ENCODE measurements at regions of chr22 and their contacts with region 1.

Region 1: DNA sequence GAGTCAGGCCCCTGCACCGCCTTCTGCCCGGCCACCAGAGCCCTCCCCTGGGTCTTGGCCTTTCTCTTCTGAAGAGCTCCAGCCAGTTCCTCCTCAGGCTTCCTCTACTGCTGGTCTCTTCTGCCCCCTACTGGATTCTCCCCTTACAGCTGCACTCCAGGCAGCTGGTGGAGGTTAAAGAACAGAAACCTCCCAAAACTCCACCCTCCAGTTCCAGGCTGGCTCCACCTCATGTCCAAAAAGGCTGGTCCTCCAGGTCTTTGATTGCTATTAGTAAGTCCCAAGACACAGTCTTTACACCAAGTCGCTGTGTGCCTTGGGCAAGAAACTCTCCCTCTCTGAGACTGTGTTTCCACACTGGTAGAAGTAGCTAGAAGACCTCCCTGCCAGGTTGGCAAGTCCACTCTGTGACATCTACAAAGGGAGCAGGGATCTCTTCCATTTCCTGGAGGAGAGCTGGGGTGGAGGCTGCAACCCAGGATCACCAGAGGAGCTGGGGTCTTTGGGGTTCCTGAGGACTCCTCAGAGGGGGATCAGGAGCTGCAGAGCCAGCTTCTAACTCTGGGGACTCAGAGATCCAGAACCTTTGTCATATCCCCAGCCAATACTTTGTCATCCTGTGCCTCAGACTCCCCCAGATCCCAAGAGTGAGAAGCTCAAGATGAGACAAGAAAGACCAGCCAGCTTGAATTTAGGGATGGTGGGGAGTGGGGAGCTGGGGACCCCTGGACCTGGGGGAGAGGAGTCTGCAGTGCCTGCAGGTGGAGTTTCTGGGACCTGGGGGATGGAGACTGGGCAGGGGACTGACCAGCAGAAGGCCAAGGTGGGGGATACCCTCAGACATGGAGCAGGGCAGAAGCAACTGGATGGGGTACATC is 3.4 kb upstream of the IGLL5 start:
- DNase-seq: peak in 6 of 10 donors; percentile 19 to 56 (median 46)
- H3K4me3 ChIP-seq: no peak overlapping the region
- H3K27ac ChIP-seq: no peak overlapping the region
- H3K27me3 ChIP-seq: peaks cover 0 to 16% (median 0%) of the 10 kb centered on the region in 45 donors
- CTCF ChIP-seq: peak in 55 of 56 donors; percentile 40 to 80 (median 66)

Region 2: DNA sequence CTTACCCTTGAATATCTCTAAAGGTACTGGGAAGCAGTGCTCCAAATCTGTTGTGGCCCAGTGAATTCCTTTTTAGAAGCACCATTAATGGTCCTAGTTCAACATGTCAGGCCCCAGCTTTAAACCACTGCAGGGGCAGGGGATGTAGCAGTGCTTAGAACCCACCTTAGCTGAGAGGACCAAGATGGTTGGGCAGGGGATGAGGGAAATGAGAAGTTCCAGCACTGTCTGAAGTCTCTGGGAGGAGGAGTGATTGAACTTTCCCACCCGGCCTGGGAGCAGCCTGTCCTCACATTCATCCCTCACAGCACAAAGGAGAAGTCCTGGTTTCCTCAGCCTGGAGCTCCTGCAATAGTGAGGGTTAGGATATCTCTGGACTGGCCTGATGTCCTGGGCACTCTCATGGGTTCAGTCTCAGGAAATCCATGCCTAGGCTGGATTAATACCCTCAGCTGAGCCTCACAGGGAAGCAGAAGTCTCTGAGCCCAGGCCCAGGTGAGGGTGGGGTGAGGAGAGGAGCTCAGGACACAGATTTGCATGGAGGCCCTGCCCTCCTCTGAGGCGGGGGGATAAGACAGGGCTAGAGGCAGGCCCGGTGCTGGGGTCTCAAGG is 296.6 kb before region 1 on chr22:
- intact Hi-C with region 1: loop called in 1 of 2 experiments (anchors 10 kb)
- DNase-seq: no peak
- H3K4me3 ChIP-seq: no peak overlapping the region
- H3K27ac ChIP-seq: no peak overlapping the region
- H3K27me3 ChIP-seq: peaks cover 0 to 22% (median 0%) of the 10 kb centered on the region in 45 donors
- CTCF ChIP-seq: no peak

Region 3: DNA sequence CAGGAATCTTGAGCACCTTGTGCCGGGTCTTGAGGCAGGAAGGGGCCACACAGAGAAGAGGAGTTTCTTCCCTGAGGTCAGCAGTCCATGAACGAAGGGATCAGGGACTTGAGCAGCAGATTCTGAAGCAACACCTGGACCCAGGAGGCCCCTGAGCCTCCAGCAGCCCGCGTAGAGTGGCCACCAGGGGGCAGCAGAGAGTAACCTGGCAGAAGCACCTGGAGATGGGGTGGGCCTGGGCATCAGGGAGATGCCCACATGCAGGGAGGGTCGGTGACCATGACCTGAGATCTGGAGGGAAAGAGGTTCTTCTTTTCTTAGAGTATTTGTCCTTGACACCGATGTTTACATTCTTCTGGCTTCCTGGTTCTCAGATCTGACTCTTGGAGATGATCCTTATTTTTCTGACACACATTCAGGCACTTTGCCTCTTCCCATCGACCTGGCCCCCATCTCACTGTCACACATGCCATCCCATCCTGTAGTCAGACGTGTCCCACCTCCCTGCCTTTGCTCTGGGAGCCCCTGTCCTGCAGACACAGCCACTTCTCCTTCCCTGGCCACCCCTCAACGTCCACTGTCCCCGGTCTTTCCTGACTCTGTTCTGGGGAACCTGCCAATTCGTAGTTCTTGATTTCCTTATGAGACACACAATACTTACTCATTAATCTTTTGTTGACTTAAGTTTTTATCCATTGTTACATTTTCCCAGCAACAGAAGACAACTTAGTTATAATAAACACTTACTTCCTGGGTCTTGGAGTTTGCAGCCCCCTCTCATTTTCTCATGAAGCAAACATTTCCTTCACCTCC is 173.3 kb before region 1 on chr22:
- intact Hi-C with region 1: no loop called
- DNase-seq: peak in 6 of 10 donors; percentile 11 to 66 (median 48)
- H3K4me3 ChIP-seq: no peak overlapping the region
- H3K27ac ChIP-seq: no peak overlapping the region
- H3K27me3 ChIP-seq: peaks cover 0 to 24% (median 0%) of the 10 kb centered on the region in 45 donors
- CTCF ChIP-seq: peak; percentile 69 to 96 (median 89)

Region 4: DNA sequence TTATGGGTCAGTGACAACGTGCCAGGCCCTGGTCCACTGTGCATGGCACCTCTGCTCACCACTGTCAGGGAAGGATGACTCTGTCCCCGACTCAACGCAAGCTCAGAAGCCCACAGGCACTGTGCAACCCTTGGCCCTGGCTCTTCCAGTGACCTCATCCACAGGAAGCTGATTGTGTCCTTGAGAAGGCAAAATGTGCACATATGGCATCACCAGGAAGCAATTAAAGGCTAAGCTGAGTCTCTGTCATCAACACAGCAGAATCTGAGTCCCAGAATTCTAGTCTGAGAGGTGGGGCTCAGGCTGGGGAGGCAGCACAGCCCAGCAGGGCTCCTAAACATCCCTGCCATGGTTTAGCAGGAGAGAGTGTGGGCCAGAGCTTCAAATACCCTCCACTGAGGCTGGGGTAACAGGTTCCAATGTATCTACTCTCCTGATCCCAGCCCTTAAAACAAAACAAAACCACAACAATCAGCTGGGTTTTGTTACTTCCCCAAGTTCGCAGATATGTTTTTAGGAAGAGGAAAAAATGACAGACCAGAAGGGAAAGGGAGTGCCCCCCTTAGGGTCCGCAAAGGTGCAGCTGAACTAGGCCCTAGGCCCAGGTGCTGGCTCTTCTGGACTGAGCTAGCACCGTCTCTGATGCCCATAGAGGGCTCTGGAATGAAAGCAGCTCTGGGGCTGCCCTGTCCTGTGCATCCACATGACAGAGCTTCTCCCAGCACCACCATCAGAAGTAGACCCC is 152.6 kb after region 1 on chr22:
- intact Hi-C with region 1: no loop called
- DNase-seq: peak in 1 of 10 donors; percentile 62
- H3K4me3 ChIP-seq: no peak overlapping the region
- H3K27ac ChIP-seq: no peak overlapping the region
- H3K27me3 ChIP-seq: peaks cover 0 to 14% (median 0%) of the 10 kb centered on the region in 45 donors
- CTCF ChIP-seq: no peak